Activated T-helper 1 cell treated with anti-CD3 and anti-CD28 coated beads, Interleukin-12 subunit alpha, Interleukin-12 subunit beta, Interleukin-2, Interleukin-4 antibody, amounts not matched to agents 30 ng/mL and 10 ng/mL and 1 ng/mL, durations not matched to agents 14 hours and 24 hours and 36 hours (primary cell): ENCODE measurements at regions of chr17 and their contacts with region 1.

Region 1: GRCh38 chr17:40362696-40363110 is 1.8 kb downstream of the GJD3 start:
- DNase-seq: peak; percentile 85
- H3K4me3 Mint-ChIP-seq: peak overlapping the region; percentile 77
- H3K27ac Mint-ChIP-seq: peak overlapping the region; percentile 84
- H3K4me1 Mint-ChIP-seq: peaks cover 14% of the 10 kb centered on the region
- H3K27me3 Mint-ChIP-seq: peaks cover 1% of the 10 kb centered on the region

Region 2: GRCh38 chr17:40158438-40159013 is 204.2 kb before region 1 on chr17:
- intact Hi-C with region 1: no loop called
- DNase-seq: no peak
- H3K4me3 Mint-ChIP-seq: no peak overlapping the region
- H3K27ac Mint-ChIP-seq: peak overlapping the region; percentile 49
- H3K4me1 Mint-ChIP-seq: peaks cover 31% of the 10 kb centered on the region
- H3K27me3 Mint-ChIP-seq: no peaks in the 10 kb centered on the region

Region 3: DNA sequence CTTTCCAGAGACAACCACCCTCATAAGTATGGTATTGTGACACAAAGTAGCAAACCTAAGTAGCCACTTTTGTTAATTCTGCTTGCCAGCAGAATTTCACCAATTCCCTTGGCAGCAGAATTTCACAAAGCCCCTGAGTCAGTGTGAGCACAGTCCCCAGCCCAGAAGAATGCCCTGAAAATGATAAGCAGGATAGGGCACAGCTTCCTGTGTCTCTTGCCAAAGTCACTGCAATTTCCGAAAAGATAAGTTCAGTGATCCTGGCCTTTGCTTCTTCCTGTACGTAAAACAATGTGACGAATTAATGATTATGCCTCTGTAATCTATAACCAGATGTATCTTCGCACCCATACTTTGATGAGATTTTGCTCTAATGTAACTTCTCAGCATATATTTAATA is 159.6 kb before region 1 on chr17:
- intact Hi-C with region 1: loop called (anchors 5 kb)
- DNase-seq: no peak
- H3K4me3 Mint-ChIP-seq: no peak overlapping the region
- H3K27ac Mint-ChIP-seq: no peak overlapping the region
- H3K4me1 Mint-ChIP-seq: no peaks in the 10 kb centered on the region
- H3K27me3 Mint-ChIP-seq: peaks cover 18% of the 10 kb centered on the region

Region 4: GRCh38 chr17:40399185-40399584 is 36.5 kb after region 1 on chr17:
- intact Hi-C with region 1: loop called (anchors 2 kb)
- DNase-seq: no peak
- H3K4me3 Mint-ChIP-seq: no peak overlapping the region
- H3K27ac Mint-ChIP-seq: no peak overlapping the region
- H3K4me1 Mint-ChIP-seq: peaks cover 42% of the 10 kb centered on the region
- H3K27me3 Mint-ChIP-seq: no peaks in the 10 kb centered on the region

Region 5: GRCh38 chr17:40443583-40444327 is 81.1 kb after region 1 on chr17:
- intact Hi-C with region 1: loop called (anchors 1 kb)
- DNase-seq: peak; percentile 63
- H3K4me3 Mint-ChIP-seq: peak overlapping the region; percentile 80
- H3K27ac Mint-ChIP-seq: peak overlapping the region; percentile 90
- H3K4me1 Mint-ChIP-seq: peaks cover 65% of the 10 kb centered on the region
- H3K27me3 Mint-ChIP-seq: peaks cover 7% of the 10 kb centered on the region

Region 6: GRCh38 chr17:40622509-40622928 is 259.8 kb after region 1 on chr17:
- intact Hi-C with region 1: loop called (anchors 5 kb)
- DNase-seq: no peak
- H3K4me3 Mint-ChIP-seq: peak overlapping the region; percentile 35
- H3K27ac Mint-ChIP-seq: peak overlapping the region; percentile 71
- H3K4me1 Mint-ChIP-seq: peaks cover 70% of the 10 kb centered on the region
- H3K27me3 Mint-ChIP-seq: no peaks in the 10 kb centered on the region